MCF 10A (cell line): ENCODE measurements at regions of chr6 and their contacts with region 1.

Region 1: GRCh38 chr6:73520688-73521350 is at the start of gene EEF1A1:
- DNase-seq: peak; percentile 100
- H3K4me3 Mint-ChIP-seq: peak within 1 kb of the TSS; percentile 88
- H3K27ac Mint-ChIP-seq: peak within 1 kb of the TSS; percentile 99
- H3K4me1 Mint-ChIP-seq: peaks cover 12% of the 10 kb centered on the region
- H3K27me3 Mint-ChIP-seq: no peaks in the 10 kb centered on the region
- CTCF ChIP-seq: no peak
- total RNA-seq, gene EEF1A1: 13,507 and 14,346 TPM in 2 replicates

Region 2: DNA sequence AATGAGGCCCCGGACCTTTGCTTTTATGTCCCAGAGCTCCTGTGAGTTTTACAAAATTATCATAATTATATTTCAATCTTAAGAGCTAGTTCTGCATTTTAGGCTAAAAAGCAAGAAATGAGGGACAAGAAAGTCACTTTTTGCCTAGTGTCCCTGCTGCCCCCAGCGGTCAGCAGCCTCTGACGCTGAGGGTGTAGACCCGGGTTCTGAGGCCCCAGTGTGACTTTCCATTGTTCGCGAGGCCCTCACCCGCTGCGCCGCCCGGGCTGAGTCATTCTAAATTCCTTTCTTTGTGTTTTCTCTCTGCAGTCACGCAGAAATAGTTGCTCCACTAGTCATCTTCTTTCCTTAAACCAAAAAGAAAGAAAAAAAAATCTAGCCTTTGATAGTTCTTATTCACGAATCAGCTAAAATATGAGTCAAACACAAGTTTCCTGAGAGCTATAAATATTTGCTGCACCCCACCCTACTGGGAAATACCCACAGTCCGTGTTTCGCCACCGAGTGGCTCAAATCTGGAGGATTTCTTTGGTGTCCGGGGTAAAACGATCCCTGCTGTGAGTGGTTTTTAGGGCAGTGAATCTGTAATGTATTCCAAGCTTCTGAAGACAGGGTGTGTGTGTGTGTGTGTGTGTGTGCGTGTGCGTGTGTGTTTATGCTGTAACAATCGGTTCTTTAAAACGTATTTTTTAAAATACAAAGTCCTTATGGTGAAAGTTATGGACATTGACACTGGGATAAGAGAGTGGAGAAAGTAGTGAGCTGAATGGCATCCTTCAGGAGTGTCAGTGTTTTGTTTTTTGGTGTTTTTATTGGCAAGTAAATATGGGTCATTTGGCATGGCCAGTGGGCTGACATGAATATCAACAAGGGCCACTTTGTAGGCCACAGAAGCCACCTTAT is 59.7 kb after region 1 on chr6:
- CTCF ChIA-PET with region 1: interaction called, 15 read pairs
- POLR2A ChIA-PET with region 1: interaction called, 244 read pairs
- intact Hi-C with region 1: loop called (anchors 1 kb)
- DNase-seq: peak; percentile 94
- H3K4me3 Mint-ChIP-seq: peak overlapping the region; percentile 81
- H3K27ac Mint-ChIP-seq: peak overlapping the region; percentile 100
- H3K4me1 Mint-ChIP-seq: peaks cover 9% of the 10 kb centered on the region
- H3K27me3 Mint-ChIP-seq: no peaks in the 10 kb centered on the region
- CTCF ChIP-seq: peak; percentile 17

Region 3: GRCh38 chr6:73610444-73611275 is 89.8 kb after region 1 on chr6:
- CTCF ChIA-PET with region 1: interaction called, 108 read pairs
- POLR2A ChIA-PET with region 1: interaction called, 185 read pairs
- intact Hi-C with region 1: loop called (anchors 1 kb)
- DNase-seq: peak; percentile 64
- H3K4me3 Mint-ChIP-seq: no peak overlapping the region
- H3K27ac Mint-ChIP-seq: peak overlapping the region; percentile 19
- H3K4me1 Mint-ChIP-seq: no peaks in the 10 kb centered on the region
- H3K27me3 Mint-ChIP-seq: no peaks in the 10 kb centered on the region
- CTCF ChIP-seq: peak; percentile 42

Region 4: GRCh38 chr6:73653571-73654424 is 133.0 kb after region 1 on chr6 and contains the start of gene SLC17A5:
- CTCF ChIA-PET with region 1: interaction called, 11 read pairs
- POLR2A ChIA-PET with region 1: interaction called, 196 read pairs
- intact Hi-C with region 1: no loop called
- DNase-seq: peak; percentile 95
- H3K4me3 Mint-ChIP-seq: peak within 1 kb of the TSS; percentile 97
- H3K27ac Mint-ChIP-seq: peak within 1 kb of the TSS; percentile 91
- H3K4me1 Mint-ChIP-seq: peaks cover 32% of the 10 kb centered on the region
- H3K27me3 Mint-ChIP-seq: no peaks in the 10 kb centered on the region
- CTCF ChIP-seq: no peak
- total RNA-seq, gene SLC17A5: 6.1 and 7.2 TPM in 2 replicates

Region 5: GRCh38 chr6:73832313-73832712 is 311.5 kb after region 1 on chr6:
- CTCF ChIA-PET with region 1: no interaction called
- POLR2A ChIA-PET with region 1: no interaction called
- intact Hi-C with region 1: no loop called
- DNase-seq: no peak
- H3K4me3 Mint-ChIP-seq: no peak overlapping the region
- H3K27ac Mint-ChIP-seq: no peak overlapping the region
- H3K4me1 Mint-ChIP-seq: no peaks in the 10 kb centered on the region
- H3K27me3 Mint-ChIP-seq: no peaks in the 10 kb centered on the region
- CTCF ChIP-seq: no peak